ENCODE measurements at regions of chr9 and their contacts with region 1.

Region 1: GRCh38 chr9:102072059-102072764 is 333.8 kb upstream of the GRIN3A start:
- DNase-seq: no peak
- ATAC-seq: no peak
- H3K4me3 ChIP-seq: no peak overlapping the region
- H3K4me3 Mint-ChIP-seq: no peak overlapping the region
- H3K27ac ChIP-seq: no peak overlapping the region
- H3K27ac Mint-ChIP-seq: no peak overlapping the region
- H3K4me1 ChIP-seq: no peaks in the 10 kb centered on the region
- H3K4me1 Mint-ChIP-seq: no peaks in the 10 kb centered on the region
- H3K27me3 ChIP-seq: no peaks in the 10 kb centered on the region
- H3K27me3 Mint-ChIP-seq: no peaks in the 10 kb centered on the region
- CTCF ChIP-seq: no peak

Region 2: DNA sequence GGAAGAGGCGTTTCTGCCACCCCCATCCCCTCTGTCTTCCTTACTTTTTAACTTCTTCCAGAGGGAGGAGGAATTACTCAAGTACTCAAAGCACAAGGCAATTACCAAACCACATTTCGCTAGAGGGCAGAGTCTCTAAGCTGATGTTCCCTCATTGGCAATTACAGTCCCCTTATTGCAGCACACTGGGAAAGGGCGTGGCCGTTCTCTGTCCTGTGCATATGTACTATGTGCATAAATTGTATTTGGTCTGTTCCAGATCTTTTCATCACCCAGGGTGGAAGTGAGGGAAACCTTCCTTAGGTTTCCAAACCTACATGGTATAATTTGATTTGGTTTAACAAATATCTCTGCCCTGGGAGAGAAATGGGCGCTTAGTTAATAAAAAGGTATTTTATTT is 606.8 kb before region 1 on chr9:
- CTCF ChIA-PET with region 1: no interaction called
- POLR2A ChIA-PET with region 1: no interaction called
- intact Hi-C with region 1: no loop called
- DNase-seq: peak in 3 of 14 experiments; percentile 5 to 12 (median 5)
- ATAC-seq: no peak
- H3K4me3 ChIP-seq: no peak overlapping the region
- H3K4me3 Mint-ChIP-seq: no peak overlapping the region
- H3K27ac ChIP-seq: no peak overlapping the region
- H3K27ac Mint-ChIP-seq: no peak overlapping the region
- H3K4me1 ChIP-seq: no peaks in the 10 kb centered on the region
- H3K4me1 Mint-ChIP-seq: no peaks in the 10 kb centered on the region
- H3K27me3 ChIP-seq: peaks cover 10 to 17% of the 10 kb centered on the region in 2 experiments
- H3K27me3 Mint-ChIP-seq: peaks cover 71% of the 10 kb centered on the region
- CTCF ChIP-seq: no peak

Region 3: GRCh38 chr9:102087141-102087540 is 14.9 kb after region 1 on chr9:
- CTCF ChIA-PET with region 1: no interaction called
- POLR2A ChIA-PET with region 1: no interaction called
- intact Hi-C with region 1: loop called in 1 of 2 experiments (anchors 1 kb)
- DNase-seq: no peak
- ATAC-seq: no peak
- H3K4me3 ChIP-seq: no peak overlapping the region
- H3K4me3 Mint-ChIP-seq: no peak overlapping the region
- H3K27ac ChIP-seq: no peak overlapping the region
- H3K27ac Mint-ChIP-seq: no peak overlapping the region
- H3K4me1 ChIP-seq: no peaks in the 10 kb centered on the region
- H3K4me1 Mint-ChIP-seq: no peaks in the 10 kb centered on the region
- H3K27me3 ChIP-seq: no peaks in the 10 kb centered on the region
- H3K27me3 Mint-ChIP-seq: no peaks in the 10 kb centered on the region
- CTCF ChIP-seq: no peak

Measured in CD4-positive, alpha-beta T cell (primary cell).